ENCODE measurements at regions of chr19 and their contacts with region 1.

Region 1: GRCh38 chr19:2561895-2562294 is 86.0 kb downstream of the GADD45B start:
- DNase-seq: peak; percentile 42 to 82 (median 66)
- ATAC-seq: peak; percentile 94 to 98
- H3K4me3 Mint-ChIP-seq: peak overlapping the region; percentile 92 to 97 (median 96)
- H3K27ac Mint-ChIP-seq: peak overlapping the region; percentile 95 to 99 (median 98)
- H3K4me1 Mint-ChIP-seq: peaks cover 5 to 24% (median 19%) of the 10 kb centered on the region in 4 donors
- H3K27me3 Mint-ChIP-seq: no peaks in the 10 kb centered on the region

Region 2: GRCh38 chr19:2494444-2495129 is 67.3 kb before region 1 on chr19:
- POLR2A ChIA-PET with region 1: interaction called, 11 read pairs
- DNase-seq: peak; percentile 28 to 77 (median 42)
- ATAC-seq: peak; percentile 75 to 81
- H3K4me3 Mint-ChIP-seq: peak overlapping the region; percentile 57 to 85 (median 80)
- H3K27ac Mint-ChIP-seq: peak overlapping the region in 6 of 10 donors; percentile 48 to 78 (median 68)
- H3K4me1 Mint-ChIP-seq: peaks cover 10 to 44% (median 34%) of the 10 kb centered on the region in 4 donors
- H3K27me3 Mint-ChIP-seq: peaks cover 3 to 42% (median 13%) of the 10 kb centered on the region in 5 donors

Measured in naive thymus-derived CD8-positive, alpha-beta T cell (primary cell).